ENCODE measurements at regions of chr5 and their contacts with region 1.

Region 1: GRCh38 chr5:95781101-95781583 is 41.4 kb downstream of the GLRX start:
- DNase-seq: peak; percentile 57 to 87 (median 66)
- ATAC-seq: peak; percentile 94
- H3K4me3 ChIP-seq: no peak overlapping the region
- H3K4me3 Mint-ChIP-seq: peak overlapping the region; percentile 68
- H3K27ac ChIP-seq: no peak overlapping the region
- H3K27ac Mint-ChIP-seq: peak overlapping the region; percentile 26
- H3K4me1 ChIP-seq: no peaks in the 10 kb centered on the region
- H3K4me1 Mint-ChIP-seq: peaks cover 5% of the 10 kb centered on the region
- H3K27me3 ChIP-seq: no peaks in the 10 kb centered on the region
- H3K27me3 Mint-ChIP-seq: no peaks in the 10 kb centered on the region
- CTCF ChIP-seq: peak; percentile 100

Region 2: DNA sequence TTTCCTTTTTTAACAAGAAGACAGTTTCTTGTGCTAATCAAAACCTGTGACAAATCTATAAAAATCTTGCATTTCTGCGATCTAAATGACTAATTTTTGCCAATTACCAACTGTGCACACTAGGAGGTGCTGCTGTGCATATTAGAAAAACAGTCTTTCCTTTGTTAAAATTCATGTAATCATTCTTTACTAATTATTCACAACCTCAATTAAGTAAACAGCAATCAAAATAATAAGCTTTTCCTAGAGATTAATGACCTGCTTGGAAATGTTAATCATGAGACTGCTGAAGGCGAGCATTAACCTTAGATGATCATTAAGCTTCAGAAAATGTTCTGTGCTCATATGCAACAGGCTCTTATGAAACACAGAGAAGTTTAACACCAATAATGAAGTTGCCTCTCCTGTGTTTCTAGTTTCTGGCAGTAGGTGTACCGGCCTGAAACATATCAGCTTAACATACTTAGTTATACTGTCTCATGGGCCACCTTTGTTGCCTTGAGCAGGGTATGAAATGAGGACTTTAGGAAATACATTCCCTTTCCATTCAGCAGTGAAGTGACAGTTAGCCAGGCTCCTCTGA is 116.8 kb before region 1 on chr5:
- CTCF ChIA-PET with region 1: interaction called, 4 read pairs
- POLR2A ChIA-PET with region 1: interaction called, 4 read pairs
- intact Hi-C with region 1: loop called (anchors 2 to 5 kb)
- DNase-seq: peak in 9 of 14 experiments; percentile 6 to 62 (median 20)
- ATAC-seq: no peak
- H3K4me3 ChIP-seq: no peak overlapping the region
- H3K4me3 Mint-ChIP-seq: no peak overlapping the region
- H3K27ac ChIP-seq: no peak overlapping the region
- H3K27ac Mint-ChIP-seq: no peak overlapping the region
- H3K4me1 ChIP-seq: no peaks in the 10 kb centered on the region
- H3K4me1 Mint-ChIP-seq: peaks cover 6% of the 10 kb centered on the region
- H3K27me3 ChIP-seq: no peaks in the 10 kb centered on the region
- H3K27me3 Mint-ChIP-seq: no peaks in the 10 kb centered on the region
- CTCF ChIP-seq: peak; percentile 95

Region 3: GRCh38 chr5:95793610-95794009 is 12.5 kb after region 1 on chr5:
- CTCF ChIA-PET with region 1: interaction called, 16 read pairs
- POLR2A ChIA-PET with region 1: interaction called, 4 read pairs
- intact Hi-C with region 1: no loop called
- DNase-seq: no peak
- ATAC-seq: no peak
- H3K4me3 ChIP-seq: no peak overlapping the region
- H3K4me3 Mint-ChIP-seq: no peak overlapping the region
- H3K27ac ChIP-seq: no peak overlapping the region
- H3K27ac Mint-ChIP-seq: no peak overlapping the region
- H3K4me1 ChIP-seq: no peaks in the 10 kb centered on the region
- H3K4me1 Mint-ChIP-seq: no peaks in the 10 kb centered on the region
- H3K27me3 ChIP-seq: no peaks in the 10 kb centered on the region
- H3K27me3 Mint-ChIP-seq: no peaks in the 10 kb centered on the region
- CTCF ChIP-seq: no peak

Region 4: GRCh38 chr5:95835682-95836385 is 54.7 kb after region 1 on chr5:
- CTCF ChIA-PET with region 1: interaction called, 19 read pairs
- POLR2A ChIA-PET with region 1: interaction called, 16 read pairs
- intact Hi-C with region 1: no loop called
- DNase-seq: peak in 10 of 14 experiments; percentile 38 to 70 (median 56)
- ATAC-seq: peak; percentile 37
- H3K4me3 ChIP-seq: peak overlapping the region; percentile 71
- H3K4me3 Mint-ChIP-seq: peak overlapping the region; percentile 83
- H3K27ac ChIP-seq: peak overlapping the region; percentile 66 to 79
- H3K27ac Mint-ChIP-seq: peak overlapping the region; percentile 79
- H3K4me1 ChIP-seq: peaks cover 32% of the 10 kb centered on the region
- H3K4me1 Mint-ChIP-seq: peaks cover 54% of the 10 kb centered on the region
- H3K27me3 ChIP-seq: no peaks in the 10 kb centered on the region
- H3K27me3 Mint-ChIP-seq: no peaks in the 10 kb centered on the region
- CTCF ChIP-seq: no peak

Region 5: GRCh38 chr5:95961617-95962474 is 180.7 kb after region 1 on chr5 and contains the start of gene ELL2:
- CTCF ChIA-PET with region 1: interaction called, 3 read pairs
- POLR2A ChIA-PET with region 1: no interaction called
- intact Hi-C with region 1: loop called in 1 of 2 experiments (anchors 2 kb)
- DNase-seq: peak; percentile 81 to 99 (median 94)
- ATAC-seq: peak; percentile 87
- H3K4me3 ChIP-seq: peak within 1 kb of the TSS; percentile 66
- H3K4me3 Mint-ChIP-seq: peak within 1 kb of the TSS; percentile 96
- H3K27ac ChIP-seq: peak within 1 kb of the TSS; percentile 70 to 72
- H3K27ac Mint-ChIP-seq: peak within 1 kb of the TSS; percentile 95
- H3K4me1 ChIP-seq: peaks cover 33% of the 10 kb centered on the region
- H3K4me1 Mint-ChIP-seq: peaks cover 40% of the 10 kb centered on the region
- H3K27me3 ChIP-seq: no peaks in the 10 kb centered on the region
- H3K27me3 Mint-ChIP-seq: no peaks in the 10 kb centered on the region
- CTCF ChIP-seq: no peak
- total RNA-seq, gene ELL2: 93.5 to 98.1 TPM

Measured in CD4-positive, alpha-beta T cell (primary cell).